Heart left ventricle (tissue), 16 donors: ENCODE measurements at regions of chr14 and their contacts with region 1.

Region 1: GRCh38 chr14:55546212-55546874 is 33.7 kb upstream of the KTN1 start:
- DNase-seq: no peak
- ATAC-seq: no peak
- H3K4me3 ChIP-seq: no peak overlapping the region
- H3K27ac ChIP-seq: no peak overlapping the region
- H3K4me1 ChIP-seq: no peaks in the 10 kb centered on the region
- H3K27me3 ChIP-seq: no peaks in the 10 kb centered on the region
- CTCF ChIP-seq: no peak
- POLR2A ChIP-seq: no peak

Region 2: DNA sequence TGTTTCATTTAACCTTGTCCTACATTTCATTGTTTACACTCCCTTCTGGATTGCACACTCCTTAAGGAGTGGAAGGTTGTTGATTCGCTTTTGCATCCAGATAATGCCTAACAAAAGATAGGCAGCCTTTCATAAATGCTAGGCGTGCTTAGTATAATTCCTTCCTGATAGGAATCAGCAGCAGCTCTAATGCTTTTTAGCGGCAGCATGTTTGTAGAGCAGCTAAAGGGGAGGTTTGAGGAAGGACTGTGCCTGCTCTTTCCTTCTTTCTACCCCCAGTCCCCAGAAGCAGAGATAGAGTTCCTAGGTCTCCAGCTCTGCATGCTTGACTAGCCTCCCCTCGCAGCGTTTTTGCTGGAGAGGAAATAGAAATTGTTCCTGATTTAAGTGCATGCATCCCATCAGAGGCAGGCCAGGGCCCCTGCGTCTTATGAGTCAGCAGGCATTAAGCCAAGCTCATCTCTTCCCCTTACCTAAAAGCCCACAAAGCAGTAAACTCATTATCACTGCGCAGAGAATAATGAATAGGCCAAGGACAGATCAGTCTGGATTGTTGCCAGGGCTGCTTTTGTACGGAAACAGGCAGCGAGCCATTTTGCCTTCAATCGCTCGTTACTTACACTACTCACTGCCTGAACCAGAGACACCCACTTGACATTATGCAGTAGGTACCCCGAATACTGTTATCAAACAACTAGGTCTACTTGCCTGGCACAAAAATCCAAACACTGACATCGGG is 91.9 kb before region 1 on chr14:
- intact Hi-C with region 1: loop called in 1 of 10 experiments (anchors 5 kb)
- DNase-seq: peak; percentile 26 to 58 (median 36)
- ATAC-seq: peak; percentile 64 to 80 (median 70)
- H3K4me3 ChIP-seq: peak overlapping the region in 1 of 12 donors; percentile 15
- H3K27ac ChIP-seq: peak overlapping the region in 3 of 12 donors; percentile 4 to 20 (median 16)
- H3K4me1 ChIP-seq: peaks cover 0 to 36% (median 14%) of the 10 kb centered on the region in 12 donors
- H3K27me3 ChIP-seq: no peaks in the 10 kb centered on the region
- CTCF ChIP-seq: no peak
- POLR2A ChIP-seq: no peak